ENCODE measurements at regions of chr4 and their contacts with region 1.

Region 1: GRCh38 chr4:148557793-148558192 is 115.6 kb upstream of the NR3C2 start:
- DNase-seq: no peak
- H3K4me3 ChIP-seq: no peak overlapping the region
- H3K27ac ChIP-seq: no peak overlapping the region
- H3K4me1 ChIP-seq: no peaks in the 10 kb centered on the region
- H3K27me3 ChIP-seq: no peaks in the 10 kb centered on the region
- CTCF ChIP-seq: no peak
- POLR2A ChIP-seq: no peak

Region 2: DNA sequence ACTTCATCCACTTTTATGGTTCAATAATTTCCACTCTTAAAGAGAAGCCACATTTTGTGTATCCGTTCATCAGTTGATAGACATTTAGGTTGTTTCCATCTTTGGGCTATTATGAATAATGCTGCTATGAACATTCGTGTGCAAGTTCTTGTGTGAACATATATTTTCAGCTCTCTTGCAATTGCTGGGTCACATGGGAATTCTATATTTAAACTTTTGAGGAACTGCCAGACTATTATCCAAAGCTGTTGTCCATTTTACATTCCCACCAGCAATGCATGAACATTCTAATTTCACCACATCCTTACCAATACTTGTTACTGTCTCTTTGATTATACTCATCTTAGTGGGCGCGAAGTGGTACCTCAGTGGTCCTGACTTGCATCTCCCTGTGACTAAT is 177.5 kb before region 1 on chr4:
- intact Hi-C with region 1: loop called (anchors 5 kb)
- DNase-seq: no peak
- H3K4me3 ChIP-seq: no peak overlapping the region
- H3K27ac ChIP-seq: no peak overlapping the region
- H3K4me1 ChIP-seq: peaks cover 9% of the 10 kb centered on the region
- H3K27me3 ChIP-seq: no peaks in the 10 kb centered on the region
- CTCF ChIP-seq: no peak
- POLR2A ChIP-seq: no peak

Region 3: DNA sequence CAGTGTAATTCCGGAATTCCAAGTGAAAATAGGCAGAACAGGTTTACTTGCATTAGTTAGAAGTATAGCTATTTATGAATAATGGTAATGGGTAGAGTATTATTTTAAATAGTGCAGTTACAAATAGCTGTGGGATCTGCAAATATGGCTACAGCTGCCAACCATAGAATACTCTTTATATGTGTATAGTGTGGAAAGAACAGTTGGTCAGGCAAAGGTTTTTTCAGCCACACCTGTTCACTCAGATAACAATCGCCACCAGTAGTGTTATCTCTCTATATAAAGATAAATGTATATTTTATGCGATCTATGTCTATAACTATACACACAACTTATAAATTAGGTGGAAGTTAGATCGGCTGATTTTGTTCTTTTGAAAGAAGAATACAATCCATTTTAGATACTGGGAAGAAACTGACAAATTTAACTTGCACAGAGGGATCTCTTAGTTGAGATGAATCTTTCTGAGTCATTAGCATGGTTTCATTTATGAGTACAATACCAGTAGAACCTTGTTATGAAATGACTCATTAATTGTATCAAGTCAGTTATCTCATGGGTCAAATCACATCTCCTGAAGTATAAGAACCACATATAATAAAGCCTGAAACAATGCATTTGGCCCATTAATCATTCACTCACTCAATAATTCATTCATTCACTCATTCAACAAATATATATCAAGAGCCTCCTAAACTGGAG is 14.7 kb before region 1 on chr4:
- intact Hi-C with region 1: no loop called
- DNase-seq: no peak
- H3K4me3 ChIP-seq: no peak overlapping the region
- H3K27ac ChIP-seq: no peak overlapping the region
- H3K4me1 ChIP-seq: no peaks in the 10 kb centered on the region
- H3K27me3 ChIP-seq: no peaks in the 10 kb centered on the region
- CTCF ChIP-seq: no peak
- POLR2A ChIP-seq: no peak

Measured in vagina (tissue), 2 donors.